B cell (primary cell): ENCODE measurements at regions of chr3 and their contacts with region 1.

Region 1: GRCh38 chr3:113838631-113839209 is at the start of gene GRAMD1C:
- DNase-seq: peak; percentile 92
- ATAC-seq: peak; percentile 99
- H3K4me3 ChIP-seq: peak within 1 kb of the TSS; percentile 59 to 84 (median 70)
- H3K4me3 Mint-ChIP-seq: peak within 1 kb of the TSS; percentile 91
- H3K27ac ChIP-seq: peak within 1 kb of the TSS; percentile 8 to 62
- H3K27ac Mint-ChIP-seq: peak within 1 kb of the TSS; percentile 71
- H3K4me1 ChIP-seq: peaks cover 7 to 13% of the 10 kb centered on the region in 2 donors
- H3K4me1 Mint-ChIP-seq: peaks cover 29% of the 10 kb centered on the region
- H3K27me3 ChIP-seq: no peaks in the 10 kb centered on the region
- H3K27me3 Mint-ChIP-seq: no peaks in the 10 kb centered on the region
- CTCF ChIP-seq: peak; percentile 84
- total RNA-seq, gene GRAMD1C: 47.1 and 52.5 TPM in 2 replicates

Region 2: GRCh38 chr3:113802795-113803455 is 35.8 kb before region 1 on chr3:
- CTCF ChIA-PET with region 1: interaction called, 6 read pairs
- POLR2A ChIA-PET with region 1: interaction called, 5 read pairs
- intact Hi-C with region 1: loop called (anchors 2 kb)
- DNase-seq: peak; percentile 8
- ATAC-seq: peak; percentile 36
- H3K4me3 ChIP-seq: no peak overlapping the region
- H3K4me3 Mint-ChIP-seq: no peak overlapping the region
- H3K27ac ChIP-seq: no peak overlapping the region
- H3K27ac Mint-ChIP-seq: peak overlapping the region; percentile 50
- H3K4me1 ChIP-seq: peaks cover 3 to 7% of the 10 kb centered on the region in 2 donors
- H3K4me1 Mint-ChIP-seq: peaks cover 22% of the 10 kb centered on the region
- H3K27me3 ChIP-seq: no peaks in the 10 kb centered on the region
- H3K27me3 Mint-ChIP-seq: no peaks in the 10 kb centered on the region
- CTCF ChIP-seq: no peak

Region 3: DNA sequence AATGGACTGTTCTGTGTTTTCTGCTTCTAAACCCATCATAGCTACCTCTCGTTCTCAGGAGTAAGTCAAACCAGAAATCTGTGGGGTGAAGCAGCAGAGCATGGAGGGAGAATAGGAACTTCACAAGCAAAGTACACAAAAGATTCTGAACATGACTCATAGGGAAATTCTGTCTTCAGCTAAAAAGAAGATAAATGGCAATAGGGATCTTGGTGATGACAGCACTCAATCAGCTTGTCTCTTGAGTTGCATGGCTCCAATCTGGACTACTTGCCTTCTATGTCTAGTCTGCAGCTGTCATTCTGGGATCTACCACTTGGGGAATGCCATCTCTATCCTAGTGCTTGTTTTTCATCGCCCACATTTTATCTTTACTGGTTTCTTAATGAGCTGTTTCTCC is 13.6 kb before region 1 on chr3:
- CTCF ChIA-PET with region 1: interaction called, 32 read pairs
- POLR2A ChIA-PET with region 1: interaction called, 7 read pairs
- intact Hi-C with region 1: loop called (anchors 1 kb)
- DNase-seq: peak; percentile 46
- ATAC-seq: peak; percentile 77
- H3K4me3 ChIP-seq: no peak overlapping the region
- H3K4me3 Mint-ChIP-seq: peak overlapping the region; percentile 76
- H3K27ac ChIP-seq: peak overlapping the region; percentile 11
- H3K27ac Mint-ChIP-seq: peak overlapping the region; percentile 95
- H3K4me1 ChIP-seq: peaks cover 32 to 36% of the 10 kb centered on the region in 2 donors
- H3K4me1 Mint-ChIP-seq: peaks cover 40% of the 10 kb centered on the region
- H3K27me3 ChIP-seq: no peaks in the 10 kb centered on the region
- H3K27me3 Mint-ChIP-seq: no peaks in the 10 kb centered on the region
- CTCF ChIP-seq: no peak

Region 4: DNA sequence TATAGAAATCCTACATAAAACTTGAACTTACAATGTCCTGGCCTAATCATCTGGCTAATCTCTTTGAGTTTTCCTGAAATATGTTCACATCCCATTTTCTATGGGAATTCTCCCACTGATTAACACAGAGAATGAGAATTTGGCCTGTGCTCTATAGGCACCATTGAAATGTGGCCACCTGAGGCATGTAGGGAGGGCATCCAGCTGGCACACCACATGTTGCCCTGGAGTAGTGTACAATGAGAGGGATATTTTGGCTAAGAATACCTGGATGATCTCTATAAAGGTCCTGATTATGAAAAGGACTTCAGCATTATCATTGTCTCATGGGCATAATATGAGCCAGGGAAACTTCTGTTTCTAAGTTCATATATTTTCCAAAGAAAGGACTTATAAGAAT is 984.3 kb after region 1 on chr3:
- CTCF ChIA-PET with region 1: no interaction called
- POLR2A ChIA-PET with region 1: no interaction called
- intact Hi-C with region 1: no loop called
- DNase-seq: no peak
- ATAC-seq: no peak
- H3K4me3 ChIP-seq: no peak overlapping the region
- H3K4me3 Mint-ChIP-seq: no peak overlapping the region
- H3K27ac ChIP-seq: no peak overlapping the region
- H3K27ac Mint-ChIP-seq: no peak overlapping the region
- H3K4me1 ChIP-seq: no peaks in the 10 kb centered on the region
- H3K4me1 Mint-ChIP-seq: no peaks in the 10 kb centered on the region
- H3K27me3 ChIP-seq: no peaks in the 10 kb centered on the region
- H3K27me3 Mint-ChIP-seq: no peaks in the 10 kb centered on the region
- CTCF ChIP-seq: no peak